ENCODE measurements at regions of chr7 and their contacts with region 1.

Region 1: GRCh38 chr7:98168181-98168905 is 42.9 kb upstream of the BHLHA15 start:
- DNase-seq: peak; percentile 87
- CTCF ChIP-seq: peak; percentile 61

Region 2: GRCh38 chr7:98106647-98107445 is 61.5 kb before region 1 on chr7 and contains the start of gene LMTK2:
- CTCF ChIA-PET with region 1: interaction called, 88 read pairs
- POLR2A ChIA-PET with region 1: no interaction called
- DNase-seq: peak; percentile 99
- CTCF ChIP-seq: peak; percentile 96

Region 3: DNA sequence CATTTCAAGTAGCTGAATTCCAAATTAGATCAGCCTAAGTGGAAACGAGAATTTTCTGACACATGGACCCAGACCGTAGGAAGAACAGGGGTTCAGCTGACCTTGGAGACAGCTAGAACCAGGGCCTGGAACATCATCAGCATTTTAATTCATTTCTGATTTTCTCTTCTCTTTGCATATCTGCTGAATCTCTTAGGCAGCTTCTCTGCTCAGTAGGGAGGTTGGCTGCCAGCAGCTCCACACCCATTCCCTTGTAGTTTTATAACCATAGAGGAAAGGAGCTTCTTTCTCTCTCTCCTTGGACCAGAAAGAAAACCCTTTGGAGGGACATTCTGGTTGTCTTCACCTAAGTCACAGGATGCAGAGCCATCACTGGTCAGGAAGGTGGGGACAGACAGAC is 25.7 kb before region 1 on chr7:
- CTCF ChIA-PET with region 1: interaction called, 11 read pairs
- POLR2A ChIA-PET with region 1: no interaction called
- DNase-seq: no peak
- CTCF ChIP-seq: no peak

Region 4: GRCh38 chr7:98157761-98158160 is 10.6 kb before region 1 on chr7:
- CTCF ChIA-PET with region 1: interaction called, 27 read pairs
- POLR2A ChIA-PET with region 1: no interaction called
- DNase-seq: no peak
- CTCF ChIP-seq: no peak

Region 5: GRCh38 chr7:98202367-98203195 is 34.2 kb after region 1 on chr7:
- CTCF ChIA-PET with region 1: interaction called, 13 read pairs
- POLR2A ChIA-PET with region 1: no interaction called
- DNase-seq: peak; percentile 92
- CTCF ChIP-seq: no peak